ENCODE measurements at regions of chr17 and their contacts with region 1.

Region 1: GRCh38 chr17:50478391-50479381 is at the start of gene RSAD1:
- DNase-seq: peak; percentile 91
- H3K4me3 ChIP-seq: peak within 1 kb of the TSS; percentile 54 to 71 (median 64)
- H3K27ac ChIP-seq: peak within 1 kb of the TSS; percentile 84 to 92 (median 89)
- H3K4me1 ChIP-seq: peaks cover 0 to 32% (median 24%) of the 10 kb centered on the region in 4 donors
- H3K27me3 ChIP-seq: peaks cover 0 to 13% (median 7%) of the 10 kb centered on the region in 3 donors
- CTCF ChIP-seq: peak; percentile 68 to 88 (median 72)
- EP300 ChIP-seq: no peak
- POLR2A ChIP-seq: no peak
- total RNA-seq, gene RSAD1: 18.6 to 27.4 (median 22.7) TPM

Region 2: GRCh38 chr17:50361561-50362480 is 116.9 kb before region 1 on chr17:
- intact Hi-C with region 1: loop called (anchors 2 kb)
- DNase-seq: peak; percentile 75
- H3K4me3 ChIP-seq: no peak overlapping the region
- H3K27ac ChIP-seq: peak overlapping the region in 3 of 4 donors; percentile 19 to 62 (median 30)
- H3K4me1 ChIP-seq: peaks cover 0 to 23% (median 17%) of the 10 kb centered on the region in 4 donors
- H3K27me3 ChIP-seq: no peaks in the 10 kb centered on the region
- CTCF ChIP-seq: peak in 3 of 4 experiments; percentile 34 to 67 (median 65)
- EP300 ChIP-seq: no peak
- POLR2A ChIP-seq: no peak

Region 3: GRCh38 chr17:50527155-50527762 is 48.6 kb after region 1 on chr17:
- intact Hi-C with region 1: no loop called
- DNase-seq: no peak
- H3K4me3 ChIP-seq: no peak overlapping the region
- H3K27ac ChIP-seq: no peak overlapping the region
- H3K4me1 ChIP-seq: peaks cover 0 to 4% (median 2%) of the 10 kb centered on the region in 4 donors
- H3K27me3 ChIP-seq: peaks cover 2 to 37% (median 18%) of the 10 kb centered on the region in 3 donors
- CTCF ChIP-seq: no peak
- EP300 ChIP-seq: no peak
- POLR2A ChIP-seq: no peak

Region 4: GRCh38 chr17:50541716-50542688 is 63.3 kb after region 1 on chr17:
- intact Hi-C with region 1: loop called (anchors 2 kb)
- DNase-seq: peak; percentile 92
- H3K4me3 ChIP-seq: peak overlapping the region; percentile 39 to 70 (median 60)
- H3K27ac ChIP-seq: peak overlapping the region; percentile 50 to 79 (median 72)
- H3K4me1 ChIP-seq: peaks cover 0 to 23% (median 17%) of the 10 kb centered on the region in 4 donors
- H3K27me3 ChIP-seq: no peaks in the 10 kb centered on the region
- CTCF ChIP-seq: no peak
- EP300 ChIP-seq: no peak
- POLR2A ChIP-seq: peak in 1 of 2 donors; percentile 13

Region 5: DNA sequence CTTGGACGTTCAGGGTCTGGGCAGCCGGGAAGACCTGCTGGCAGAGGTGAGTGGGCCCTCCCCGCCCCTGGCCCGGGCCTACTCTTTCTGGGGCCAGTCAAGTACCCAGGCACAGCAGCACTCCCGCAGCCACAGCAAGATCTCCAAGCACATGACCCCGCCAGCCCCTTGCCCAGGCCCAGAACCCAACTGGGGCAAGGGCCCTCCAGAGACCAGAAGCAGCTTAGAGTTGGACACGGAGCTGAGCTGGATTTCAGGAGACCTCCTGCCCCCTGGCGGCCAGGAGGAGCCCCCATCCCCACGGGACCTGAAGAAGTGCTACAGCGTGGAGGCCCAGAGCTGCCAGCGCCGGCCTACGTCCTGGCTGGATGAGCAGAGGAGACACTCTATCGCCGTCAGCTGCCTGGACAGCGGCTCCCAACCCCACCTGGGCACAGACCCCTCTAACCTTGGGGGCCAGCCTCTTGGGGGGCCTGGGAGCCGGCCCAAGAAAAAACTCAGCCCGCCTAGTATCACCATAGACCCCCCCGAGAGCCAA is 147.4 kb after region 1 on chr17:
- intact Hi-C with region 1: loop called (anchors 2 kb)
- DNase-seq: peak; percentile 90
- H3K4me3 ChIP-seq: no peak overlapping the region
- H3K27ac ChIP-seq: no peak overlapping the region
- H3K4me1 ChIP-seq: peaks cover 0 to 8% (median 4%) of the 10 kb centered on the region in 4 donors
- H3K27me3 ChIP-seq: peaks cover 0 to 43% (median 10%) of the 10 kb centered on the region in 3 donors
- CTCF ChIP-seq: peak; percentile 34 to 61 (median 54)
- EP300 ChIP-seq: no peak
- POLR2A ChIP-seq: no peak

Region 6: GRCh38 chr17:50686494-50687199 is 208.0 kb after region 1 on chr17:
- intact Hi-C with region 1: loop called (anchors 5 kb)
- DNase-seq: peak; percentile 95
- H3K4me3 ChIP-seq: no peak overlapping the region
- H3K27ac ChIP-seq: peak overlapping the region; percentile 75 to 88 (median 80)
- H3K4me1 ChIP-seq: peaks cover 0 to 60% (median 44%) of the 10 kb centered on the region in 4 donors
- H3K27me3 ChIP-seq: no peaks in the 10 kb centered on the region
- CTCF ChIP-seq: no peak
- EP300 ChIP-seq: peak in 2 of 4 donors; percentile 10 to 48
- POLR2A ChIP-seq: no peak

Measured in sigmoid colon (tissue), 7 donors.